ENCODE measurements at regions of chr19 and their contacts with region 1.

Region 1: DNA sequence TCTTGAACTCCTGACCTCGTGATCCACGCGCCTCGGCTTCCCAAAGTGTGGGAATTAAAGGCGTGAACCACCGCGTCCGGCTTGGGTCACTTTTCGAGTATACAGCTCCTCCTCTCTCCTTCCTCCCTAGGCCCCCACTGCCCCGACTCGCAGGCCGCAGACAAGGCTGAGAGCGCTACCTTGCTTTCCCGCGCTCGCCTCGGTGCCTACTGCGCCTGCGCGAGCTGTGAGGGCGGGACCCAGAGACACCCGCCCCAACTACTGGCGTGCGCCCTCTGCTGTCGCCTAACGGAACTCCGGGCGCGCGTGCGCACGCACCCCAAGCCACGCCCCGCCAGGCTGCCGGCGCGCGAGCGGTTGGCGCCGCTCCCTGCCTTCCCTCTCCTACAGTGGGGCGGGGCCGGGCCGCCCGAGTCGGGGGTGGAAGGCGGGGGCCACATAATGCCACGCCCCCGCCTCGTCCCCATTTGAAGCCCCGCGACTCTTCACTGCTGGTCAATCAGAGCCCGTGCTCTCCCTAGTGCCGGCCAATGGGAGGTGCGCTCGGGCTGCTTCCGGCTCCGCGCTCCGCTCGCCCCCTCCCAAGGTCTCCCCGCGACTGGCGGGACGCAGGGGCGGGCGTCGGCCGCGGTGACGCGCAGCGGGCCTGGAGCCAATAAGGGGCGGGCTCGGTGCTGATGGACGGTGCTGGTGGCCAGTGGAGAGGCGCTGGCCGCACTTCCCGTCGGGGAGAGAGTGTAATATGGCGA is at the start of gene RAB8A:
- DNase-seq: peak; percentile 99
- ATAC-seq: peak; percentile 95
- H3K4me3 ChIP-seq: peak within 1 kb of the TSS; percentile 76
- H3K27ac ChIP-seq: peak within 1 kb of the TSS; percentile 76
- H3K4me1 ChIP-seq: peaks cover 7% of the 10 kb centered on the region
- H3K27me3 ChIP-seq: no peaks in the 10 kb centered on the region
- CTCF ChIP-seq: peak; percentile 98
- POLR2A ChIP-seq: no peak
- RAD21 ChIP-seq: peak; percentile 54
- total RNA-seq, gene RAB8A: 135 and 158 TPM in 2 replicates

Region 2: GRCh38 chr19:16095071-16095571 is 16.2 kb before region 1 on chr19:
- CTCF ChIA-PET with region 1: no interaction called
- POLR2A ChIA-PET with region 1: no interaction called
- dilution Hi-C with region 1: no loop called
- in situ Hi-C with region 1: no loop called
- intact Hi-C with region 1: no loop called
- DNase-seq: no peak
- ATAC-seq: no peak
- H3K4me3 ChIP-seq: no peak overlapping the region
- H3K27ac ChIP-seq: peak overlapping the region; percentile 62; the same call in 1 of the 2 replicates
- H3K4me1 ChIP-seq: peaks cover 9% of the 10 kb centered on the region; the same call in 1 of the 2 replicates
- H3K27me3 ChIP-seq: no peaks in the 10 kb centered on the region
- CTCF ChIP-seq: no peak
- POLR2A ChIP-seq: no peak
- RAD21 ChIP-seq: no peak

Region 3: GRCh38 chr19:16145414-16145813 is 34.1 kb after region 1 on chr19:
- CTCF ChIA-PET with region 1: no interaction called
- POLR2A ChIA-PET with region 1: no interaction called
- dilution Hi-C with region 1: no loop called
- in situ Hi-C with region 1: no loop called
- intact Hi-C with region 1: loop called (anchors 5 kb)
- DNase-seq: no peak
- ATAC-seq: no peak
- H3K4me3 ChIP-seq: no peak overlapping the region
- H3K27ac ChIP-seq: no peak overlapping the region
- H3K4me1 ChIP-seq: peaks cover 6% of the 10 kb centered on the region
- H3K27me3 ChIP-seq: no peaks in the 10 kb centered on the region; the same call in 1 of the 2 replicates
- CTCF ChIP-seq: no peak
- POLR2A ChIP-seq: no peak
- RAD21 ChIP-seq: no peak

Measured in IMR-90 (cell line).